ENCODE measurements at regions of chr1 and their contacts with region 1.

Region 1: DNA sequence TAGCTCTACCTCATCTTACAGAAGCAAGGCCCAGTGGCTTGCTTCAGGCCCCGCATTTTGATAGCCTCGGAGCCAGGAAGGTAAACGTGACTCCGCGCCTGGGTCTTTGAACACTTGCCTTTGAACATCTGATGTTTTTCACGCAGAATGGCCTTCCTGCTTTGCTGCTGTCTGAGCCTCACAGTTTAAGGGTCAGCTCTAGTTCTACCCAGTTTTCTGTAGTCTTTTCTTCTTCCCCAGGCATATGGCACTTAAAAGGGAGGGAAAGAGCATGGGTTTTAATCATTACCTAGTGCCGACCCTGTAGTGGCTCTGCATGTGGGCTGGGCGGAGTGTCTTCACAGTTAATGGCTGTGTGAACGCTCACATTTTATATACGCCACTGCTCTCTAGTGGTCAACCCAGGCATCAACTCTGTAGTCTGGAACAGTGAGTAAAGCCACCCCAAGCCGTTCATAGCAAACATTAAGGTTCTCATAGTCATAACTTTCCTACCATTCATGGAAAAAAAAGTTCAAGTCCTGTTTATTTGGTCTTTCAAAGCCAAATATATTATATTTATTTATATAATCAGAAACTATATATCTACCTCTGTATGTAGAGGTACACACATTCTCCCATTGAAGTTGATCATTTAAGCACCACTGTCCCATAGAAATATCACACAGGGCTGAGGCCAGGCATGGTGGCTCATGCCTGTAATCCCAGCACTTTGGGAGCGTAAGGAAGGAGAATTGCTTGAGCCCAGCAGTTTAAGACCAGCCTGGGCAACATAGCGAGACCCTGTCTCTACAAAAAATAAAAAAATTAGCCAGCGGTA is 78.1 kb downstream of the IER5 start:
- DNase-seq: peak; percentile 48 to 67
- ATAC-seq: peak; percentile 98 to 100
- H3K4me3 ChIP-seq: no peak overlapping the region
- H3K27ac ChIP-seq: peak overlapping the region; percentile 61 to 69 (median 64)
- H3K4me1 ChIP-seq: peaks cover 0 to 4% of the 10 kb centered on the region in 2 donors
- H3K27me3 ChIP-seq: no peaks in the 10 kb centered on the region
- CTCF ChIP-seq: peak; percentile 81 to 93 (median 87)
- POLR2A ChIP-seq: no peak

Region 2: DNA sequence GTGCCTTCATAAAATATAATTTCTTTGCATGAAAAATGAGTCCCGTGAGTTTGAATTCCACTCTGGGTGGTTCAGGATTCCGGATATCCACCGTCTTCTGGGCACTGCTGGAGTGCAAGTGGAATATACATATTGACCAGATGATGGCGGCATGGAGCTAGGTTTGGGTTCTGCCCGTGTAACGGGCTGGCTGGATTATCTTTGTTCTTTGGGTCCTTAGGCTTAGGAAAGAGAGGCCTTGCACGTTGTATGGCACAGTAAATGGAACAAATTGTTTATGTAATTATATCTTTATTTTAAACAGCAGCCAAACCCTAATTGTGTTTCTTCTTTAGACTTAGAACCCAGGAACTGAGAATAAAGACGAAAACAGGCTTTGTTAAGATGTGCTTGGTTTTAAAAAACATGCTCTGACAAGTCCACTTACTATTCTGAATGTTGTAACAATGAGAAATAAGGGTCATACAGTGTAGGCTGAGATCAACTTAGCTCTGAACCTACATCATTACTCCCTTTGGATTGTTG is 650.7 kb before region 1 on chr1:
- in situ Hi-C with region 1: loop called (anchors 10 to 25 kb)
- intact Hi-C with region 1: no loop called
- DNase-seq: peak; percentile 41 to 48
- ATAC-seq: peak; percentile 96 to 100
- H3K4me3 ChIP-seq: no peak overlapping the region
- H3K27ac ChIP-seq: no peak overlapping the region
- H3K4me1 ChIP-seq: peaks cover 3 to 7% of the 10 kb centered on the region in 2 donors
- H3K27me3 ChIP-seq: no peaks in the 10 kb centered on the region
- CTCF ChIP-seq: peak; percentile 64 to 81 (median 80)
- POLR2A ChIP-seq: no peak

Region 3: DNA sequence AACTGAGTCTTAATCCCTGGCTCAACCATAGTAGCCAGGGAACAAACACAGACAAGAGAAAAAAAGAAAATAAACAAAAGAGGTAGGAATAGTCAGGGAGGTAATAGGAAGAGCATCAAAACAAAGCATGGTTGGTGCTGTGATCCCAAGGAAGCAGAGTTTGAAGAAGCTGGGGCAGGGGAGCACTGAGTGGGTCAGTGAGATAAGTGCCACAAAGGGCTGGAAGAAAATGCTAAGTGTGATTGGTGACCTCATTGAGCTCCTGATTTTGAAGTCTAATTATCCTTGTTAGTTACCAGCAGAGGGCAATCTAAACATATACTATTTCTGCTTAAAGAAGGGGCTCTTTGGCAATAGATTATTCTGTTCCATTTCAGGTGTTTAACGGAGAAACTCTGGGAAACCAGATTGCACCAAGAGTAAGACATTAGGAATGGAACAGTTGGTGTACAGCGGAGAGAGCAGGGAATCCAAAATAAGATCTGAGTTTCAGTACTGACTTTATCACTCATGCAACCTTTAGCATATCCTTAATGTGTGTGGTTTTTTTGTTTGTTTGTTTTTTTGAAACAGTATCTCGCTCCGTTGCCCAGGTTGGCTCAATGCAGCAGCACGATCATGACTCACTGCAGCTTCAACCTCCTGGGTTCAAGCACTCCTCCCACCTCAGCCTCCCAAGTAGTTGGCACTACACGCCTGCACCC is 284.6 kb before region 1 on chr1:
- in situ Hi-C with region 1: loop called in 3 of 4 experiments (anchors 5 to 25 kb)
- intact Hi-C with region 1: loop called (anchors 1 kb)
- DNase-seq: no peak
- ATAC-seq: peak in 1 of 2 donors; percentile 56
- H3K4me3 ChIP-seq: no peak overlapping the region
- H3K27ac ChIP-seq: no peak overlapping the region
- H3K4me1 ChIP-seq: peaks cover 0 to 6% of the 10 kb centered on the region in 2 donors
- H3K27me3 ChIP-seq: no peaks in the 10 kb centered on the region
- CTCF ChIP-seq: peak; percentile 22 to 50 (median 39)
- POLR2A ChIP-seq: no peak

Region 4: GRCh38 chr1:180964595-180964994 is 202.0 kb before region 1 on chr1:
- in situ Hi-C with region 1: no loop called
- intact Hi-C with region 1: no loop called
- DNase-seq: no peak
- ATAC-seq: no peak
- H3K4me3 ChIP-seq: no peak overlapping the region
- H3K27ac ChIP-seq: no peak overlapping the region
- H3K4me1 ChIP-seq: peaks cover 46 to 50% of the 10 kb centered on the region in 2 donors
- H3K27me3 ChIP-seq: no peaks in the 10 kb centered on the region
- CTCF ChIP-seq: no peak
- POLR2A ChIP-seq: no peak

Region 5: DNA sequence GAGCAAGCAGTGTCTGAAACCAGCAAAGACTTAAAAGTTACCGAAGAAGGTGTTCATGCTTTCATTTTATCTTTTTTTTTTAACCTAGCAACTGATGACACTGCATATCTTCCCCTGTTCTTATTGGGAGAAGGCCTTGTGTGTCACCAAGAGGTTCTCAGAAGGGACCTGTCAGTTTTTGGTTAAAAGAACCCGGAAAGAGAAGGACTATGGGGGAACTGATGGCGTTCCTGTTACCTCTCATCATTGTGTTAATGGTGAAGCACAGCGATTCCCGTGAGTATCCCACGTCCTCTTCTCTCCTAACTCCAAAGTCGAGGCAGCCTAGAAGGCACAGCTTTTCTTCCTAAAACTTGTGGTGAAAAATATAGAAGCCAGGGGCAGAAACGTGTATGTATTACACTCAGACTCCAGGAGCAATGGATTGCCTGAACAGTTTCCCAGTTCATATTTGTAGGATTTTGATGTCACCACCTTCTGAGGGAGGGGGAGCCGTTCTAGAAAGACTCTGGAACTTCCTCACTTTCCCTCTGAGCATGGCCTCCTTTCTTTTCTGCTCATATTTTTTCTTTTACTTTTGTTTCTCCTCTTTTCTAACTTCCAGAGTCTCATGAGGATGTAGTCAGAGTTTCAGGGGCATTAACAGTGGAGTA is 132.7 kb before region 1 on chr1 and contains the start of gene MR1:
- in situ Hi-C with region 1: no loop called
- intact Hi-C with region 1: loop called (anchors 1 kb)
- DNase-seq: no peak
- ATAC-seq: peak; percentile 94
- H3K4me3 ChIP-seq: peak within 1 kb of the TSS; percentile 42 to 57 (median 49)
- H3K27ac ChIP-seq: peak within 1 kb of the TSS; percentile 84 to 91 (median 90)
- H3K4me1 ChIP-seq: peaks cover 13 to 17% of the 10 kb centered on the region in 2 donors
- H3K27me3 ChIP-seq: no peaks in the 10 kb centered on the region
- CTCF ChIP-seq: no peak
- POLR2A ChIP-seq: peak; percentile 21 to 55
- total RNA-seq, gene MR1: 1.6 to 3.5 (median 3.0) TPM

Measured in gastrocnemius medialis (tissue), 4 donors.